ENCODE measurements at regions of chr4 and their contacts with region 1.

Region 1: GRCh38 chr4:24584175-24584850 is at the start of gene DHX15:
- DNase-seq: peak; percentile 90 to 95 (median 91)
- H3K4me3 ChIP-seq: peak within 1 kb of the TSS; percentile 92
- H3K4me3 Mint-ChIP-seq: peak within 1 kb of the TSS; percentile 89 to 100 (median 95)
- H3K27ac ChIP-seq: peak within 1 kb of the TSS; percentile 93
- H3K27ac Mint-ChIP-seq: peak within 1 kb of the TSS; percentile 96 to 100 (median 98)
- H3K4me1 ChIP-seq: peaks cover 30% of the 10 kb centered on the region
- H3K4me1 Mint-ChIP-seq: peaks cover 33 to 49% (median 39%) of the 10 kb centered on the region in 3 donors
- H3K27me3 ChIP-seq: no peaks in the 10 kb centered on the region
- H3K27me3 Mint-ChIP-seq: peaks cover 2 to 4% of the 10 kb centered on the region in 2 donors
- total RNA-seq, gene DHX15: 207 to 209 TPM

Region 2: GRCh38 chr4:24568425-24568824 is 15.9 kb before region 1 on chr4:
- CTCF ChIA-PET with region 1: interaction called, 3 read pairs
- POLR2A ChIA-PET with region 1: interaction called, 10 read pairs
- DNase-seq: no peak
- H3K4me3 ChIP-seq: no peak overlapping the region
- H3K4me3 Mint-ChIP-seq: peak overlapping the region in 1 of 7 donors; percentile 41
- H3K27ac ChIP-seq: no peak overlapping the region
- H3K27ac Mint-ChIP-seq: no peak overlapping the region
- H3K4me1 ChIP-seq: peaks cover 51% of the 10 kb centered on the region
- H3K4me1 Mint-ChIP-seq: peaks cover 75 to 92% (median 91%) of the 10 kb centered on the region in 3 donors
- H3K27me3 ChIP-seq: no peaks in the 10 kb centered on the region
- H3K27me3 Mint-ChIP-seq: no peaks in the 10 kb centered on the region

Region 3: DNA sequence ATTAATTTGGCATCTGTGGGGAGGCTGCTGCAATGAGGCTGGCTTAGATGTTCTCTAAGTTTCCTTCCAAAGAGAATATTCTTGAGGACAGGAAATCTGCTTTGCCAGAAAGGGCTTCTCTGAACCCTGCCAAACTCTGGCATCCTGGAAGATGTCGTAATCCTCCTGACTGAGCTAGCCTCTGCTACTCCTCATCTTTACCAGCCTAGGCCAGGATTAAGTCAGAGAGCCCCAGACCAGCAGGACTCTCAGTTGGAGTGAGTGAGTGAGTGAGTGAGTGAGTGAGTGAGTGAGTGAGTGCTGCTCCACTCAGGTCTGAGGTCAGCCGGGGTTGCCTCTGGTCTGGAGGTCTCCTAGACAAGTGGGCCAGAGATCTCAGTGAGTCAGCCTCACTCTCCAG is 106.1 kb after region 1 on chr4:
- CTCF ChIA-PET with region 1: no interaction called
- POLR2A ChIA-PET with region 1: no interaction called
- DNase-seq: no peak
- H3K4me3 ChIP-seq: no peak overlapping the region
- H3K4me3 Mint-ChIP-seq: no peak overlapping the region
- H3K27ac ChIP-seq: no peak overlapping the region
- H3K27ac Mint-ChIP-seq: no peak overlapping the region
- H3K4me1 ChIP-seq: no peaks in the 10 kb centered on the region
- H3K4me1 Mint-ChIP-seq: no peaks in the 10 kb centered on the region
- H3K27me3 ChIP-seq: no peaks in the 10 kb centered on the region
- H3K27me3 Mint-ChIP-seq: peaks cover 7 to 10% of the 10 kb centered on the region in 2 donors

Measured in CD8-positive, alpha-beta memory T cell (primary cell).